Activated T-helper 1 cell treated with anti-CD3 and anti-CD28 coated beads, Interleukin-12 subunit alpha, Interleukin-12 subunit beta, Interleukin-2, Interleukin-4 antibody, amounts not matched to agents 30 ng/mL and 10 ng/mL and 1 ng/mL, durations not matched to agents 14 hours and 24 hours and 36 hours (primary cell): ENCODE measurements at regions of chr10 and their contacts with region 1.

Region 1: DNA sequence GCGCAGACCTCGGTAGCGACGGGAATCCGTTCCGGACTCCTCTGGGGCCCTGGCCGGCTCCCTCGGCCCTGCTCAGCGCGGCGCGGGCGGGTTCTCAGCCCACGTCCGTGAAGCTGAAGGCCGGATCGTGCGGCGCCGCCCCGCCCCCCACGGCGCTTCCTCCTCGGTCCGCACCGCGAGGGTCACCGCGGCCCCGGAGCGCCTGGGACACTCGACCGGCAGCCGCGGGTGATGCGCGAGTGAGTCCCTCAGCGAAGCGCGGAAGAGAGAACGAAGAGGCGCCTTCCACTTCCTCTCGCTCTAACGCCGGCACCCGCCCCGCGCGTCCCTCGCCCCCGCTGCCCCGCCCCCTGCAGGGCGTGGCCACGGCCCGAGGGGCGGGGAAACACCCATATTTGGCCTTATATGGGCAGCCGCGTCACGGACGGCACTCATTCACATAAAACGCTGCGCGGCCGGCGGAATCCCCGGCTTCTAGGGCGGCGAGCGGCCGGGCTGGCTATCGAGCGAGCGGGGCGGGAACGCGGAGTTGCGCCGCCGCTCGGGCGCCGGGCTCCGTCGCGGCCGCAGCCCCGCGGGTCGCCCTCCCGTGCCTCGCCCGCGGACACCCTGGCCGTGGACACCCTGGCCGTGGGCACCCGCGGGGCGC is at the start of gene DUSP5:
- DNase-seq: peak; percentile 96
- H3K4me3 Mint-ChIP-seq: peak within 1 kb of the TSS; percentile 100
- H3K27ac Mint-ChIP-seq: peak within 1 kb of the TSS; percentile 97
- H3K4me1 Mint-ChIP-seq: peaks cover 62% of the 10 kb centered on the region
- H3K27me3 Mint-ChIP-seq: no peaks in the 10 kb centered on the region
- total RNA-seq, gene DUSP5: 140 and 141 TPM in 2 replicates

Region 2: GRCh38 chr10:110210674-110211464 is 286.7 kb before region 1 on chr10:
- intact Hi-C with region 1: loop called (anchors 2 kb)
- DNase-seq: peak; percentile 92
- H3K4me3 Mint-ChIP-seq: peak overlapping the region; percentile 96
- H3K27ac Mint-ChIP-seq: peak overlapping the region; percentile 95
- H3K4me1 Mint-ChIP-seq: peaks cover 70% of the 10 kb centered on the region
- H3K27me3 Mint-ChIP-seq: peaks cover 10% of the 10 kb centered on the region

Region 3: GRCh38 chr10:110311357-110311949 is 186.1 kb before region 1 on chr10:
- intact Hi-C with region 1: loop called (anchors 1 kb)
- DNase-seq: no peak
- H3K4me3 Mint-ChIP-seq: no peak overlapping the region
- H3K27ac Mint-ChIP-seq: no peak overlapping the region
- H3K4me1 Mint-ChIP-seq: peaks cover 51% of the 10 kb centered on the region
- H3K27me3 Mint-ChIP-seq: no peaks in the 10 kb centered on the region

Region 4: DNA sequence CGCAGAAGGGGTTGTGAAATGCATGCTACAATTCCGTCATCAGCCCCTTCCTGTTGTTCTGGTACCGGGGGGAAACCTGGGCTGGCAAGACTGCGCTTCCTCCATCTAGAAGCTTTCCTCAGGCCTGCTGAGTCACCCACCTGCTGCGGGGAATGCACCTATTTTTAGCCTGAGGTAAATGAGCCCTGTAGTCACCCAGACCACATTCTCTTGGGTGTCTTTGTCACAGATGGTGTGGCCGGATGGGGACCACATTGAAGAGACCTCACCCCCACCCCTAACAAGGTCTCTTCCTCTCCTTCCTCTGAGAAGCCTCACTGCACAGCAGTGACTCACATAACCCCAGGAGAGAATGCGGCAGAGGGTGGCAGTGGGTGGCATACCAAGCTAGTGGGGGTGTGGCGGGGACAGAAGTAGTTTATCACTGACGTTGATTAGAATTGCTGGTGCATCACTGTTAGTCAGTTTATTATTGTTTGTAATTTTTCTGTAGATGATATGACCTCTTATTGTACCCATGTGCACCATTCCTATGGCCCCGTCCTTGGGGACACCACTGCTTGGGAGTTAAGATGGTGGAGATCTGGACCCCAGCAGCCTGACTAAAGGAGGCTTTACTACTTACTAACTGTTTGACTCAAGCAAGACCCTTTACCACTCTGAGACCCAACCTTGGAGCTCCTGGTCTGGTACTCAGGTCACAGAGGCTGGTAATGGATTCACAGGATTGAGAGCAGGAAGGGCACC is 82.8 kb before region 1 on chr10:
- intact Hi-C with region 1: loop called (anchors 1 kb)
- DNase-seq: peak; percentile 87
- H3K4me3 Mint-ChIP-seq: peak overlapping the region; percentile 56
- H3K27ac Mint-ChIP-seq: peak overlapping the region; percentile 97
- H3K4me1 Mint-ChIP-seq: peaks cover 74% of the 10 kb centered on the region
- H3K27me3 Mint-ChIP-seq: peaks cover 1% of the 10 kb centered on the region

Region 5: DNA sequence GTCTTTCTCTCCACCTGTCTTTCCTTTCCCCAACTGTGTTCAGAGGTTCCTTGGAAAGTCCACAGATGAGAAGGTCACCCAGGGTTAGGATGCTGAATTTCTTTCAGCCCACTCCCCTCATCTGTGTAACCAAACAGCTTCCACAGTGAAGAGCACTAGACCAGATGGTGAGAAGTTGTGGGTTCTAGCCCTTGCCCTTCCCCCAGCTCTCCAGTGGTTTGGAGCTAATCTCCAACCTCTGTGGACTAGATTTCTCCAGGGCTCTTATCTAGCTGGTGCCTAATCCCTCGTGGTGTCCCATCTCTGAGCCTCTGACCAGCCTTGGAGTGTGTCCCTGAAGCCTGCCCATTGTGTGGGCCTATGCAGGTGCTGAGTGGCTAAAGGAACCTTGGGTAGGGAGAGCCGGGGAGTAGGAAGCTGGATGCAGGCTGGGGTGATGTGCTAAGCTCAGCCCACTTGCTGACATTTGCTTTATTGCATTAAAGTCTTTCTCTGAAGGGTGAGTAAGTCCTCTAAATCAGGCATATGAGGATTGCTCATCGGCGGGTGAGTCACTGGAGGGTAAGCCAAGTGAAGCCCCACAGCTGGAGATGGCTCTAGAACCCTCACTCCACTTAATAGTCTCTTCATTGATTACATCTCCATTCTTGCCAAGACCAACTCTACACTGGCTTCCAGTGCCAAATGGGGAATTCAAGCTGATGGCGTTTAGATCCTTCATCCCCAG is 15.1 kb after region 1 on chr10:
- intact Hi-C with region 1: loop called (anchors 1 kb)
- DNase-seq: no peak
- H3K4me3 Mint-ChIP-seq: peak overlapping the region; percentile 34
- H3K27ac Mint-ChIP-seq: peak overlapping the region; percentile 75
- H3K4me1 Mint-ChIP-seq: peaks cover 65% of the 10 kb centered on the region
- H3K27me3 Mint-ChIP-seq: no peaks in the 10 kb centered on the region

Region 6: GRCh38 chr10:110547139-110547761 is 49.7 kb after region 1 on chr10:
- intact Hi-C with region 1: loop called (anchors 1 kb)
- DNase-seq: no peak
- H3K4me3 Mint-ChIP-seq: no peak overlapping the region
- H3K27ac Mint-ChIP-seq: peak overlapping the region; percentile 3
- H3K4me1 Mint-ChIP-seq: peaks cover 29% of the 10 kb centered on the region
- H3K27me3 Mint-ChIP-seq: peaks cover 23% of the 10 kb centered on the region

Region 7: GRCh38 chr10:110820321-110820814 is 322.8 kb after region 1 on chr10:
- intact Hi-C with region 1: no loop called
- DNase-seq: no peak
- H3K4me3 Mint-ChIP-seq: no peak overlapping the region
- H3K27ac Mint-ChIP-seq: no peak overlapping the region
- H3K4me1 Mint-ChIP-seq: peaks cover 26% of the 10 kb centered on the region
- H3K27me3 Mint-ChIP-seq: peaks cover 4% of the 10 kb centered on the region

Region 8: DNA sequence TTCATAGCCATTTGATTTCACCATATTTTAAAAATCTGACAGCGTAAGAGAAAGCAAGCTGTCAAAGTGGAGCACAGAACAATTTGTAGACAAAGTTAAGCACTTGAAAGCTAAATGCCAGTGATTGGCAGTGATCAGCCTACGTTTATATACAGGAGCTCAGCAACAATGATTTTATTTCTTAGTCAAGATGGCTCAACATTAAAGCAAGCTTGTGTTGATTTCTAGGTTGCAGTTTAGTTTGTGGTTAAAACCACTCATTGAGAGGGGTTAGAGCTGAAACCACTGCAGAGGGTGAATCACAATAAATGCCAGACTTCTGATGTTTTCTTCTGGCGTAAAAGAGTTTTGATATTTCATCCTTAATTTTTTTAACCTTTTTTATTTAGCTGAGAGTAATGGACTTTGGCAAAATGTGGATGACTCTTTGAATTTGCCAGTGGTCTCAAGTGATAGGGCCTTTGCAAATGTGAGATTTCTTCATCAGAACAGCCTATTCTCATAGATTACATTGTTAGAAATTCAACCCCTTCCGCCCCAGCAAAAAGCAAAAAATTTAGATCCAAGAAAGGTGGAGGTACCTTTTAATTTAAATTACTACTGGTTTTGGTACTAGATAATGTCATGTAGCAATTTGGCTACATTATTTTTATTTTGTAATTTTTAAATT is 495.6 kb after region 1 on chr10:
- intact Hi-C with region 1: loop called (anchors 10 kb)
- DNase-seq: peak; percentile 21
- H3K4me3 Mint-ChIP-seq: peak overlapping the region; percentile 63
- H3K27ac Mint-ChIP-seq: no peak overlapping the region
- H3K4me1 Mint-ChIP-seq: peaks cover 43% of the 10 kb centered on the region
- H3K27me3 Mint-ChIP-seq: no peaks in the 10 kb centered on the region